ENCODE measurements at regions of chr7 and their contacts with region 1.

Region 1: DNA sequence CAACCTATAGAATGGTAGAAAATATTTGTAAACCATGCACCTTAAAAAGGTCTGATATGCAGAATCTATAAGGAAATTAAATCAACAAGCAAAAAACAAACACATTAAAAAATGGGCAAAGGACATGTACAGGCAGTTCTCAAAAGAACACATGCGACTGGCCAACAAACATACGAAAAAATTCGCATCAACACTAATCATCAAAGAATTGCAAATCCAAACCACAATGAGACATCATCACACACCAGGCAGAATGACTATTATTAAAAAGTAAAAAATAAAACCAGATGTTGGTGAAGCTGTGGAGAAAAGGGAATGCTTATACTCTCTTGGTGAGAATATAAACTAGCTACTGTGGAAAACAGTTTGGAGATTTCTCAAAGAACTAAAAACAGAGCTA is 33.2 kb downstream of the TMEM229A start:
- DNase-seq: no peak

Region 2: DNA sequence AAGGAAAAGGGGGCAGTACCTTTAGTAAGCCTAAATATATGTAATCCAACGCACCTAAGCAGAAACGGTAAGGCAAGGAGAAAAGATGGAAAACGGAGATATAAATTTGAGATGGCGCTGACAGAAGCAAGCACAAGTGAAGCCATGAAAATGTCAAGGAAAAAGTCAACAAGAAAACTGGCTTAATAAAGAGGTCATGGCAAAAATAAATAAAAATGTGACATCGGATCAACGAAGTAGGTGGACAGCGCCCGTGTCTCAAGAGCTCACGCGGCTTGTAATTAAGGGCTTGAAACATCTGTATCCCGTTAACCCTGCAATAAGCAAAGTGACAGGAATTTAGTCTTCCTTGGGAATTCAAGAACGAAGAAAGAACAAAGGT is 442.7 kb before region 1 on chr7:
- intact Hi-C with region 1: no loop called
- DNase-seq: peak in 1 of 10 donors; percentile 33

Region 3: DNA sequence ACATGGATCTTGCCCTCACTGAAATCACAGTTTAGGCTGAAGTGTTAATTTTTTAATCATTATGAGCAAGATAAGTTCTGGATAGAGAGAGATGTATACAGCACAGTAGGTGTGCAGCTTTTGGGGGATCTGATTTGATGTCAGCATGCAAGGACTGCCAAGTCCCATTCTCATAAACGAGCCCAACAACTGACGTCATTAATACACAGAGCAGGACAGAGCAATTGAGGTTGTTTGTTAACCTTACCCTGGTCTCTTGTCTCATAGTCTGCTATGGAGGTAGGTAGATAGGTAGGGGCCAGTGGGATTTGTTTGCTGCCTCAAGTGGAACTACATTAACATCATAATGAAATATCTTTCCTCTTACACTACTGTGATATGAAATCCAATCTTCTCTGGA is 41.7 kb after region 1 on chr7:
- intact Hi-C with region 1: loop called (anchors 1 kb)
- DNase-seq: no peak